Activated CD4-positive, alpha-beta T cell treated with anti-CD3 and anti-CD28 coated beads, Interleukin-2, amount 10 ng/mL, durations not matched to agents 24 days and 14 days (primary cell): ENCODE measurements at regions of chr15 and their contacts with region 1.

Region 1: GRCh38 chr15:25933456-25934158 is 70.5 kb upstream of the ATP10A start:
- DNase-seq: peak; percentile 90
- H3K4me3 Mint-ChIP-seq: peak overlapping the region; percentile 88
- H3K27ac Mint-ChIP-seq: peak overlapping the region; percentile 78
- H3K4me1 Mint-ChIP-seq: peaks cover 6% of the 10 kb centered on the region
- H3K27me3 Mint-ChIP-seq: peaks cover 16% of the 10 kb centered on the region

Region 2: GRCh38 chr15:25508369-25509002 is 425.1 kb before region 1 on chr15:
- intact Hi-C with region 1: loop called (anchors 1 kb)
- DNase-seq: no peak
- H3K4me3 Mint-ChIP-seq: no peak overlapping the region
- H3K27ac Mint-ChIP-seq: no peak overlapping the region
- H3K4me1 Mint-ChIP-seq: no peaks in the 10 kb centered on the region
- H3K27me3 Mint-ChIP-seq: no peaks in the 10 kb centered on the region

Region 3: DNA sequence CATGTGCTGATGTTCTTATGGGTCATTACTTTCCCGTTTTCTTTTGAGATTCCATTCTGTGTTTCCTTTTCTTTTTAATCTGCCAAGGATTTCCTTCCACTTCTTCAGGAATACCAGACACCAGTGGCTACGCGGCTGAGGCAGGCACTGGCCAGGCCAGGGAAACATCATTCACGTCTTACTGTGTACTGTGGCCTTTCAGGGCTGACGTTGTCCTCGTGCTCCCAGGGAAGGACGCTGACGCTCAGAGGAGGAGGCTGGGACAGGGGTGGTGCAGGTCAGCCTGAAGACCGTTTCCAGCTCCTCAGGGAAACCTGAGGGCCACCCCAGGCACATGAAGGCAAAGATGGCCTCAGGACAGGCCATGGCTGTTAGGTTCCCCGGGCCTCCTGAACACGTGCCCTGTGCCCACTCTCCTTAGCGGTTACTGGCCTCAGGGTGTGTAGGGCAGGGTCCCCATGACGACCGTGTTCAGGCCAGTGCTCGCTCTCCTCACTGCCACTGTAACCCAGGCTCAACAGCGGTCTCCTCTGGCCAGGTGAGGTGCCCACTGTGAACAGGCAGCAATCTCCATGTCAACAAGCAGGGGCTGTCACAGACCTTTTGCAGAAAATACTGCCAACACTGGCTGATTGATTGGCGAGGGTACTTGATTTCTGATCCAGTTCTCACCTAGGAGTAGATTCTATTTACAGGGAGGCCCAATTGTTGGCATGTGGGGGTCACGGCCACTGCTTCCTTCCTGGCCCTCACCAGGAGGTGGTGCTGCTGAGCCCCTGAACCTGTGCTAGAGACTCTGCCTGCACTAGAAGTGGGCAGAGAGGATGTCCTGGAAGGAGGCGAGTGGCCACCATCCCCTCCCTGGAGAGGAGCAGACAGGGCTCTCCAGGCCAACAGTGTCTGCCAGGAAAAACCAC is 240.0 kb before region 1 on chr15:
- intact Hi-C with region 1: loop called (anchors 2 kb)
- DNase-seq: peak; percentile 80
- H3K4me3 Mint-ChIP-seq: no peak overlapping the region
- H3K27ac Mint-ChIP-seq: no peak overlapping the region
- H3K4me1 Mint-ChIP-seq: no peaks in the 10 kb centered on the region
- H3K27me3 Mint-ChIP-seq: no peaks in the 10 kb centered on the region

Region 4: GRCh38 chr15:25739687-25740121 is 193.9 kb before region 1 on chr15:
- intact Hi-C with region 1: loop called (anchors 1 kb)
- DNase-seq: peak; percentile 78
- H3K4me3 Mint-ChIP-seq: no peak overlapping the region
- H3K27ac Mint-ChIP-seq: peak overlapping the region; percentile 12
- H3K4me1 Mint-ChIP-seq: peaks cover 17% of the 10 kb centered on the region
- H3K27me3 Mint-ChIP-seq: no peaks in the 10 kb centered on the region

Region 5: GRCh38 chr15:25783607-25784540 is 149.7 kb before region 1 on chr15:
- intact Hi-C with region 1: loop called (anchors 2 kb)
- DNase-seq: peak; percentile 85
- H3K4me3 Mint-ChIP-seq: no peak overlapping the region
- H3K27ac Mint-ChIP-seq: peak overlapping the region; percentile 84
- H3K4me1 Mint-ChIP-seq: peaks cover 35% of the 10 kb centered on the region
- H3K27me3 Mint-ChIP-seq: no peaks in the 10 kb centered on the region

Region 6: GRCh38 chr15:25863111-25863967 is 70.3 kb before region 1 on chr15 and contains the start of gene ATP10A:
- intact Hi-C with region 1: loop called (anchors 5 kb)
- DNase-seq: peak; percentile 93
- H3K4me3 Mint-ChIP-seq: peak within 1 kb of the TSS; percentile 97
- H3K27ac Mint-ChIP-seq: peak within 1 kb of the TSS; percentile 89
- H3K4me1 Mint-ChIP-seq: peaks cover 39% of the 10 kb centered on the region
- H3K27me3 Mint-ChIP-seq: peaks cover 5% of the 10 kb centered on the region
- total RNA-seq, gene ATP10A: 42.7 and 48.0 TPM in 2 replicates

Region 7: DNA sequence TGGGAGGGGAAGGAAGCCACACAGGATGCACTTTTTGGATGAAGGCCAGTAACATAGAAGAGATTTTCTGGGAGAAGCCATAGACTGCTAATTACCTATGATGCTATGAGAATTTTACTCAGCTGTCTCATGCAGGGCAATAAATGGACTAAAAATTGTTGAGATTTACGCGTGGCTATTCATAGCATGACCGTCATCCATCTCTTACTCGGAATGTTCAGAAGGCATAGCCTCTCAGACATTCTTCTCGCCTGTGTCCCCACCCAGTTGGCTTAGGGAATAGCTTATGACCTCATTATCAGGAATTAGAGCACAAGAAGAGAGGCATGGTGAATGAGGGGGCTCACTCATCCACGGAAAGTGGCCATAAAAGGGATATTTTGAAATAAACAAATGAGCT is 37.4 kb after region 1 on chr15:
- intact Hi-C with region 1: no loop called
- DNase-seq: no peak
- H3K4me3 Mint-ChIP-seq: no peak overlapping the region
- H3K27ac Mint-ChIP-seq: no peak overlapping the region
- H3K4me1 Mint-ChIP-seq: no peaks in the 10 kb centered on the region
- H3K27me3 Mint-ChIP-seq: peaks cover 8% of the 10 kb centered on the region

Region 8: DNA sequence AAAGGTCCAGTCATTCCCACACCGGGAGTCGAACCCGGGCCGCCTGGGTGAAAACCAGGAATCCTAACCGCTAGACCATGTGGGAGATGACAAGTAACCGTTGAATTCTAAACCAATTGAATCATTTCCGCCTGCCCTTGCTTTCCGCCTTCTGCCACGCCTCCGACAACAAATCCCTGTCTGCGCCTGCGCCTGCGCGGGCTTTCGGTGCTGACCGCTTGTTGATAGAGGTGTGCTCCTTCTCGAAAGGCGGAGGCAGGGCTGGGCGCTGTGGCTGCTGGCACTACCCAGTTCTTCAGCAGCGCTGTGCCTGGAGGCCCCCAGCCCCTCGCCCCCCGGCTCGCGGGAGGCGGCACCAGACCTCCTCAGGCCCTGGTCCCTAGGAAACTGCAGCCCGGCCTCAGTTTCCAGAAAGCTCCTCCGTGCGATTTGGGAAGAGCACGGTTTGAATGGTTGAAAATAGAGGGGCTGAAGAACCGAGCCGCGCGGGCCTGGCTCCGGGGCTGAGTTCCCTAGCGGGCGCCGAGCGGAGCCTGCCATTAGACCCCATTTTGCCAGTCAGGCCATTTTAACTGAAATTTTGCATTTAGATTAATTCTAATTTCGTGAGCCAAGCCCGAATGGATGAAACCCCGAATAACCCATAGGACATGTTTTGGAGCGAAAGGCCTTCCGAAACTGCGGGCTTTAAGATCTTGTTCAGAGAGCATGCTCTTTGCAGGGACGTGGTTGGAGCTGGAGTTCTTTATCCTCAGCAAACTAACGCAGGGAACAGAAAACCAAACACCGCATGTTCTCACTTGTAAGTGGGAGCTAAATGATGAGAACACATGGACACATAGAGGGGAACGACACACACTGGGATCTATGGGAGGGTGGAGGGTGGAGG is 148.9 kb after region 1 on chr15:
- intact Hi-C with region 1: loop called (anchors 10 kb)
- DNase-seq: peak; percentile 98
- H3K4me3 Mint-ChIP-seq: peak overlapping the region; percentile 86
- H3K27ac Mint-ChIP-seq: peak overlapping the region; percentile 89
- H3K4me1 Mint-ChIP-seq: peaks cover 18% of the 10 kb centered on the region
- H3K27me3 Mint-ChIP-seq: peaks cover 11% of the 10 kb centered on the region

Region 9: DNA sequence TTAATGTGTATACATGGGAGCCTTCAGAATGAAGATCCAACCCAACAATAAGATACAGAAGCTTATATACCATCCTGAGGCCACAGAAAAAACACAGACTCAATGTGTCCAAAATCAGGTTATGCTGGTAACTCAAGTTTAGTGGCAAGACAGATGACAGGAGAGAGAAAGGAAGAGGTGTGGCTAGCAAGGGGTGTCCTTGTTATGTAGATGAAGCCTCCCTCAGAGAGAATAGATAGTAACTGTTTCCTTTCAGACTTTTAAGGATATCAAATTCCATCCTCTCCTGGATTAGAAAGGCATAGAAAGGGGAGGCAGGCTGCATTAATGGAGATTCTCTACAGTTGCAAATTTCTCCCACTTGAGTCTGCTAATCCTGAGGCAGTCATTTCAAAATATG is 391.9 kb after region 1 on chr15:
- intact Hi-C with region 1: no loop called
- DNase-seq: no peak
- H3K4me3 Mint-ChIP-seq: no peak overlapping the region
- H3K27ac Mint-ChIP-seq: no peak overlapping the region
- H3K4me1 Mint-ChIP-seq: no peaks in the 10 kb centered on the region
- H3K27me3 Mint-ChIP-seq: no peaks in the 10 kb centered on the region